ENCODE measurements at regions of chr10 and their contacts with region 1.

Region 1: GRCh38 chr10:102835007-102835482 is 2.2 kb downstream of the CYP17A1 start:
- DNase-seq: peak; percentile 80
- ATAC-seq: peak; percentile 93 to 94

Region 2: DNA sequence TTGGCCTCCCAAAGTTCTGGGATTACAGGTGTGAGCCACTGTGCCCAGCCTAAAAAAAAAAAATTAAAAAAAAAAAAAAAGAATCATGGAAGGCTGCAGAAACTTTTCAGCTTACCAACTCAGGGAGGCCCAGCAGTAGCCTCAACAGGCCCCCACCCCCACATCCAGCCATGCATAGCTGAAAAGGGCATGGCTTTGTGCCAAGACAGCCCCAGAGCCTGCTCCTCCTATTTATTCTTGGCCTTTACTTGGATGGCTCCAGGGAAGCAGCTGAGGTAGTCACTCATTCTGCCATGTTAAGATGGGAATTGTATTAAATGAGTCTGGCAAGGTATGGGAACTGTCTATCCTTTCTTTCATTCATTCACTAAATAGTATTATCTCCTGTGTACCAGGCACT is 69.3 kb after region 1 on chr10:
- intact Hi-C with region 1: loop called (anchors 1 to 2 kb)
- DNase-seq: no peak
- ATAC-seq: no peak

Region 3: DNA sequence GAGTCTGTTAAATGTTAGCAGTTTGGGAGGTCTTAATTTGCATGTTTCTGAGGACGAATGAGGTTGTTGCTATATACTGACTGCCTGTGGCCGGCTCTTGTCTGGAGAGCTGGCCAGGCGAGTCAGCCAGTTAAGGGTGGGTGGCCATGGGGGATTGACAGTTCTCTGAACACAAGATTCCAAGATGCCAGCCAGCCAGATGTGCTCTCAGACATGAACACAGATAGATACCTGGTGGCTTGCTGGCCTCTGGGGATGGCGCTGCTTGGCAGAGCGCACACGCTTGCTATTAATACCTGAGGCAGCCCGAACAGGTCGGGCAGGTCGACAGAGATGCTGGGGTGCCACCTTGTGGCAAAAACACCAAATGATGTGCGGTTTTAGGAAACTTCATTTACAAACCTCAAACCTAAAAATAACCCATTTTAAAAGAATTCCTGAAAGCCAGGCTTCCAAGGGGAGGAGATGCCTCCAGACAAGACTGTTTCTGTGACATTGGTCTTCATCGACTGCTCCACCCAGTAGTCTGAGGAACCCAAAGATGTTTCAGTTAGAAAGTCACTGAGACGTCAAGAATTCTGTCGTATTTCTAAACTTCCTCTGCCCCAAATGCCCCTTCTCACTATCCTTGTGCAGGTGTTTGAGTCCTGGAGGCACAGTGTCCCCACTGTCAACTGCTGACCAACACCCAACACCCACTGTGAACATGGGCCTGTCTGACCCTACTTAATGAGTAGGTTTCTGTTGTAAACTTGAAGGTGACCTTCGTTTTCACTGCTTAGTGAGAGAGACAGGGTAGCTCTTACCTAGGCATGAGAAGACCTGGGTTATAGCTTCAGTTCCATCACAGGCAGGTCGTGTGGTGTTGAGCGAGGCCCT is 234.6 kb after region 1 on chr10:
- intact Hi-C with region 1: loop called in 1 of 2 experiments (anchors 10 kb)
- DNase-seq: peak; percentile 65
- ATAC-seq: peak; percentile 79 to 82

Measured in left cardiac atrium (tissue), 4 donors.